Activated CD8-positive, alpha-beta T cell treated with anti-CD3 and anti-CD28 coated beads, Interleukin-2, amount 10 ng/mL, durations not matched to agents 7 days and 5 days (primary cell): ENCODE measurements at regions of chr11 and their contacts with region 1.

Region 1: DNA sequence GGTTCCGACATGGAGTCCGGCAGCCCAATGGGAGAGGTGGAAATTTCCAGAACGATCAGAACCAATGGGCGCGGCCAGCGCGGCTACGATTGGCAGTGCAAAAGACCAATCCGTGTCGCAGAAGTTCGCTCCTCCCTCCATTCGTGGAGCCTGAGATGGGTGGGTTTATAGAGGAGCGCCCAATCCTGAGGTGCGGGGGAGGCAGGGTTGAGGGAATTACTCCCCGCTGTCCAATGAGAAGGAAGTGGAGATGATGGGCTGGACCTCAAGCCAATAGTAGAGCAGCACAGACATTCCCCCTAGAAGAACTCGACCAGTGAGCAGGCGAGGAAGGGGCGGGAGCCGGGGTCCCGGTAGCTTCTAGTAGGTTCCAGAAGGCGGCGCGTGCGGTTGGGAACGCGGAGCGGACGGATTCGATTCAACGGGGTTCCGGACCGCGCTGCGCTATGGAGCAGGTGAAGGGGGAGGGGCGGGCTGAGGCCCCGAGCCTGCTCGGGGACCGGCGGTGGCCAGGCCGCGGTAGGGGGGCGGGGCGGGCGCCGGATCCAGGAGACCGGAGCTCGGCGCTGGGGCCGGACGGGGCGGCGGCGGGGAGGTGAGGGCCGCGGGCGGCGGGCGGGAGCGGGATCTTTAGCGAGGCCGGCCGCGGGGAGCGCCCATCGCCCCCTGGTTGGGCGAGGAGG is at the start of gene STIP1:
- DNase-seq: peak; percentile 99
- ATAC-seq: peak; percentile 92
- H3K4me3 Mint-ChIP-seq: peak within 1 kb of the TSS; percentile 93
- H3K27ac Mint-ChIP-seq: peak within 1 kb of the TSS; percentile 98
- H3K4me1 Mint-ChIP-seq: peaks cover 53% of the 10 kb centered on the region
- H3K27me3 Mint-ChIP-seq: no peaks in the 10 kb centered on the region
- total RNA-seq, gene STIP1: 335 to 340 TPM

Region 2: DNA sequence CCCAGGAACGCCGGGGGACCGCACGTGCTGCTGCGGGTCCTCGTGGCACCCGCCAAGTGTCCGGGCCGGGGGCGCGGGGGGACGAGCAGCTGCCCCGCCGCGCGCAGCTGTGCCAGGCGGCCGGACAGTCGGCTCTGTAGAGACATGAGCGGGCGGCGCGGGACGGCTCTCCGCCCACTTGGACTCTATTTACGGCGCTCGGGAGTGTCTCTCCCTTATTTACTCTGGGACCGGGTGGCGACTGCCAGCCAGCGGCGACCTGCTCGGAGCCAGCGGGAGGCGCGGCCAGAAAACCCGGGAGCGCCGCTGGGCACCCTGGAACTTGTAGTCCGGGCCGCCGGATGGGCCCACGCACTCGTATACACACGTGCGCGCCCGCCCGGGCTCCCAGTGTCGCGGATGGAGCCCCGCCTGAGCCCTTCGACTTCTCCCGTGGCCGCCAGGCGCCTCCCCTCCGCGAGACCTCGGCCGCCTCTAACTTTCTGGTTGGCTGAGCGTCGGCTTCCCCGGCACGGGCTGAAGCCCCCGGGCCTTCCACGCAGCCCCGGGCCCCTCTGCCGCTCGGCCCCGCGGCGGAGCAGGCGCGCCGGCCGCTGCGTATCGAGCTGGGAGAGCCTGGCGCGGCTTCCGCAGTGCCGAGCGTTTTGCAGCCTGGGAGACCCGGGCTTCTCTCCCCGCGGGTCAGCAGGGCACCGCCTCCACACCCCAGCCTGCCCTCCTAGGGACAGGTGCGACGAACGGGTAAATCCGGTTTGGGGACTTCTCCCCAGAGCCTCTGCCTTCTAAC is 19.9 kb before region 1 on chr11 and contains the start of gene MACROD1:
- CTCF ChIA-PET with region 1: interaction called, 3 read pairs
- POLR2A ChIA-PET with region 1: interaction called, 15 read pairs
- DNase-seq: peak; percentile 88
- ATAC-seq: peak; percentile 98
- H3K4me3 Mint-ChIP-seq: peak within 1 kb of the TSS; percentile 86
- H3K27ac Mint-ChIP-seq: peak within 1 kb of the TSS; percentile 78
- H3K4me1 Mint-ChIP-seq: peaks cover 19% of the 10 kb centered on the region
- H3K27me3 Mint-ChIP-seq: no peaks in the 10 kb centered on the region
- total RNA-seq, gene MACROD1: 14.4 to 14.6 TPM

Region 3: GRCh38 chr11:64196626-64197025 is 10.7 kb after region 1 on chr11:
- CTCF ChIA-PET with region 1: interaction called, 5 read pairs
- POLR2A ChIA-PET with region 1: interaction called, 21 read pairs
- DNase-seq: no peak
- ATAC-seq: no peak
- H3K4me3 Mint-ChIP-seq: no peak overlapping the region
- H3K27ac Mint-ChIP-seq: no peak overlapping the region
- H3K4me1 Mint-ChIP-seq: peaks cover 29% of the 10 kb centered on the region
- H3K27me3 Mint-ChIP-seq: no peaks in the 10 kb centered on the region

Region 4: DNA sequence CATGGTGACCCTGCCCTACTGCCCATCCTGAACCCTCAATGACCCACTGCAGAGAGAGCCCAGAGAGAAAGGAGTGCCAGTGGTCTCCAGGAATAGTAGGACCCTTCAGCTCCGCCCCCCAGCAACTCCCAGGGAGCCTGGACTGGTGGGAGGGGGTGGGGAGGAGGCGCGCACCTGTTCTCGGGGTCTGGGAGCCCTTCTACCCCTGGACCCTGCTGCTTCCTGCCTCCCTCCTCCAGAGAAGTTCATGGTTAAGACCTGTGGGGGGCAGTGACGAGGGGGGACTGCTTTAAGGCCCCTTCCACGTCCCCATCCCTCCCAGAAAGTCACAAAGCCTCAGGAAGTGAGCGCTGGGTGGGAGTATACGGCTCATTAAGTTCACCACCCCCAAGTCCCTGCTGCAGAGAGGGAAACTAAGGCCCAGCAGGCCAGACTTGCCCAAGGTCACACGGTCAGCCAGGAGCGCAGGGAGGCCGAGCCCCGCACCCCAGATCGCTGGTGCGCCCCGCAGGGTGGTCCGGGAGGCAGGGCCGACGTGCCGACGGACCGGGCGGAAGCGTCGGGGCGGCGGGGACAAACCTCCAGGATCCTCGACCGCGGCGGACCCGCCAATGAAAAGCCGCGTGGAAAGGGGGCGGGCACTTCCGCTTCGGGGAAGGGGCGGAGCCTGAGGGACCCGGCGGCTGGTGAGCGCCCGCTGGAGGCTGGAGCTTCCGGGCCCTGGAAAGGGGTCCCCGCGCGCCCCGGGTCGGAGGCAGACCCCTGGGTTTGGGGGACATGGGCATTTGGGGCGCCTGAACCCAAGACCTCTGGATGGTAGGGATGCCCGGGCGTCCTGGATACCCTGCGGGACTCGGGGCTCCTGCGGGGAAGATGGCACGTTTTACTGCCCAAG is 39.9 kb after region 1 on chr11 and contains the starts of genes NUDT22 and TRPT1:
- CTCF ChIA-PET with region 1: interaction called, 3 read pairs
- POLR2A ChIA-PET with region 1: interaction called, 11 read pairs
- DNase-seq: peak; percentile 95
- ATAC-seq: peak; percentile 68
- H3K4me3 Mint-ChIP-seq: peak within 1 kb of the TSS; percentile 88
- H3K27ac Mint-ChIP-seq: peak within 1 kb of the TSS; percentile 91
- H3K4me1 Mint-ChIP-seq: peaks cover 42% of the 10 kb centered on the region
- H3K27me3 Mint-ChIP-seq: no peaks in the 10 kb centered on the region
- total RNA-seq, gene NUDT22: 86.7 to 91.6 TPM
- total RNA-seq, gene TRPT1: 37.8 to 44.8 TPM

Region 5: DNA sequence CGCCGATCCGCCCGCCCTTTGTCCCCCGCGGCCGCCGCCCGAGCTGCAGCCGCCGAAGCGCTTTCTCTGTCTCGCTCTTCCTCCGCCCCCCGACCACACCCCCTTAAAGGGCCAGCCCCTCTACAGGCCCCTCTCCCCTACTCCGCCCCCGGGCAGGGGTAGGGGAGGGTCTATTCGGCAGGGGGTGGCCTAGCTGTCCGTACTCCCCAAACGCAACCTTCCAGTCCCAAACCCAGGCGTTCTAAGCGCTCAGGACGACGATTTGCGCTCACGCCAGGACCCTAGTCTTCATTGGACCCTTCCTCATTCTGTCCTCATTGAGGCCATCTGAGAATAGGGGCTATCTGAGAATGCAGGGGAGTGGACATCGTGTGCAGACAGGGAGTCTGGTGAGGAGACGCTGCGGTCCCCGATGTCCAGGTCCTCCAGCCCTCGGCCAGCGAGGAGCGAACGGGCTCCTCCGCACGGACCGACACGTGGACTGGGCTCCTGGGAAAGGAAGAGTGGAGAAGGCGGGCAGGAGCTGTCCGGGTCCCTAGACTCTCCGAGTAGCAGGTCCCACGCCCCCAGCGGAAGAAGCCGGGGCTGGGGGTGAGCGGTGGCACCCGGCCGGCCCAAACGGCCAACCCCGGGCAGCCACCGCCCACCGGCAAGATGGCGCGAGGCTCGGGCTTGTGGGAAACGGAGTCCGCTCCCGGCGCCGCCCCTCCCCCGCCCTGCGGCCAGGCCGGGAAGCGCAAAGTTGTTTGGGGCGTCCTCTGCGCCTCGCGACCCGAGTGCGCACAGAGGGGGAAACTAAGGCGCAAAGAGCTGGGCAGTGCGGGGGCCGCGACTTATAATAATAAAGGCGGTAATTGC is 61.1 kb after region 1 on chr11 and contains the start of gene PPP1R14B:
- CTCF ChIA-PET with region 1: interaction called, 5 read pairs
- POLR2A ChIA-PET with region 1: interaction called, 29 read pairs
- DNase-seq: peak; percentile 85
- ATAC-seq: peak; percentile 61
- H3K4me3 Mint-ChIP-seq: peak within 1 kb of the TSS; percentile 88
- H3K27ac Mint-ChIP-seq: peak within 1 kb of the TSS; percentile 85
- H3K4me1 Mint-ChIP-seq: peaks cover 53% of the 10 kb centered on the region
- H3K27me3 Mint-ChIP-seq: no peaks in the 10 kb centered on the region
- total RNA-seq, gene PPP1R14B: 178 to 197 TPM

Region 6: DNA sequence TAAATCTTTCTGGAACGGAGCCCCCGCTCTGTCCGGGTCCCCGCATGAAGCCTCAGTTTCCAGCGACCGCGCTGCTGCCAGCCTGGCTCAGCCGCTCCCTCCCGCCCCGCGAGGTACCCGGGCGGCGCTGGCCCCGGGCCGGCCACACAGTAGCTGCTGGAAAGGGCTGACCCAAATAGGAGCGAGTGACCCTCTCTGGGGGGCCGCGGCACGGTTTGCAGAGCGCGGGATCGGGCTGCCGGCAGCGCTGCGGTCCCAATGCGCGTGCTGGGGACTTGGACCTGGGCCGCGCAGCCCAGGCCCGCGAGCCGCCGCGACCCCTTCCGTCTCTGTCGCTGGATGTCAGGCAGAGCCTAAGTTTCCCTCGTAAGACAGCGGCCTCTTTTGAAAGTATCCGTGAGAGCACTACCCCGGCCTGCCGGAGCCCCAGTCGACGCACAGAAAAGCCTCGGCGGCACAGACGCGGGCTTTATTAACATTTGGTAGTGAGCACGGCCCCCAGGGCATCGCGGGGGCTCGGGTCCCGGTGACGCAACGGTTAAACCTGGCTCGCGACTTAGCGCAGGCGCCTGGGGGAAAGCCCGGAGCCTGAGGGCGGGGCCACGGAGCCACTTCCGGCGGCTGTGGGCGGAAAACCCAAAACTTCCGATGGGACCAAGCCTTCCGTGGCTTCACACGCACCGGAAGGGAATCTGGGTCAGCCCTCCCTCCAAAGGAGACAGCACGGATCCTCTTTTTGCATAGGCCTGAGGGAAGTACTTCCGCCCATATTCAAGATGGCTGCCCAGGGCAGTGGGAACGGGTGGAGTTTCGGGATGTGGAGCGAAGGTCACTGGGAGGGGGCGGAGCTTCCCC is 83.7 kb after region 1 on chr11:
- CTCF ChIA-PET with region 1: no interaction called
- POLR2A ChIA-PET with region 1: interaction called, 19 read pairs
- DNase-seq: peak; percentile 97
- ATAC-seq: peak; percentile 74
- H3K4me3 Mint-ChIP-seq: peak overlapping the region; percentile 93
- H3K27ac Mint-ChIP-seq: peak overlapping the region; percentile 97
- H3K4me1 Mint-ChIP-seq: peaks cover 34% of the 10 kb centered on the region
- H3K27me3 Mint-ChIP-seq: no peaks in the 10 kb centered on the region